Activated naive CD8-positive, alpha-beta T cell treated with anti-CD3 and anti-CD28 coated beads, Interleukin-2, amount 10 ng/mL, durations not matched to agents 7 days and 5 days (primary cell): ENCODE measurements at regions of chr6 and their contacts with region 1.

Region 1: GRCh38 chr6:26156076-26156849 is 69.0 kb downstream of the HFE start:
- DNase-seq: peak; percentile 94
- ATAC-seq: peak; percentile 44
- H3K4me3 Mint-ChIP-seq: peak overlapping the region; percentile 100
- H3K27ac Mint-ChIP-seq: peak overlapping the region; percentile 99
- H3K4me1 Mint-ChIP-seq: peaks cover 43% of the 10 kb centered on the region
- H3K27me3 Mint-ChIP-seq: no peaks in the 10 kb centered on the region

Region 2: DNA sequence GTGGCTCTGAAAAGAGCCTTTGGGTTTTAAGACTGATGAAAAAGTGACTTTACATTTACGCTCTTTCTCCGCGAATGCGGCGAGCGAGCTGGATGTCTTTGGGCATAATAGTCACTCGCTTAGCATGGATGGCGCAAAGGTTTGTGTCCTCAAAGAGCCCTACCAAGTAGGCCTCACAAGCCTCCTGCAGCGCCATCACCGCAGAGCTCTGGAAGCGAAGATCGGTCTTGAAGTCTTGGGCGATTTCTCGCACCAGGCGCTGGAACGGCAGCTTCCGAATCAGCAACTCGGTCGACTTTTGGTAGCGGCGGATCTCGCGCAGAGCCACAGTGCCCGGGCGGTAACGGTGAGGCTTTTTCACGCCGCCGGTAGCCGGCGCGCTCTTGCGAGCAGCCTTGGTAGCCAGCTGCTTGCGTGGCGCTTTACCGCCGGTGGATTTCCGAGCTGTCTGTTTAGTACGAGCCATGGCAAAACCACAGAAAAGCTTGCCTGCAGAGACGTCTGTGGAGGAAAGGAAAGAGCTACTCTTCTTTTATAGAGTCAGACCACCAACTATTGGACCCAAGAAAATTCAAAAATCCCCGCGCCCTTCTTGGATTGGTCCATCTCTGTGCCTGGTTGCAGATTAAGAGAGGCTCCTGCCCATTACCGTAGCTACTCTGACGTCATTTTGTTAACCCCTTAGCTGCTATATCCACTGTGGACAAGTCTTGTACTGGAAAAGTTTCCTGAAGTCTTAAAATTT is 124.5 kb before region 1 on chr6:
- POLR2A ChIA-PET with region 1: interaction called, 253 read pairs
- DNase-seq: peak; percentile 84
- ATAC-seq: peak; percentile 66
- H3K4me3 Mint-ChIP-seq: peak overlapping the region; percentile 88
- H3K27ac Mint-ChIP-seq: peak overlapping the region; percentile 98
- H3K4me1 Mint-ChIP-seq: peaks cover 66% of the 10 kb centered on the region
- H3K27me3 Mint-ChIP-seq: peaks cover 3% of the 10 kb centered on the region

Region 3: GRCh38 chr6:26071135-26071534 is 85.1 kb before region 1 on chr6:
- POLR2A ChIA-PET with region 1: no interaction called
- DNase-seq: no peak
- ATAC-seq: no peak
- H3K4me3 Mint-ChIP-seq: no peak overlapping the region
- H3K27ac Mint-ChIP-seq: no peak overlapping the region
- H3K4me1 Mint-ChIP-seq: peaks cover 6% of the 10 kb centered on the region
- H3K27me3 Mint-ChIP-seq: peaks cover 25% of the 10 kb centered on the region

Region 4: DNA sequence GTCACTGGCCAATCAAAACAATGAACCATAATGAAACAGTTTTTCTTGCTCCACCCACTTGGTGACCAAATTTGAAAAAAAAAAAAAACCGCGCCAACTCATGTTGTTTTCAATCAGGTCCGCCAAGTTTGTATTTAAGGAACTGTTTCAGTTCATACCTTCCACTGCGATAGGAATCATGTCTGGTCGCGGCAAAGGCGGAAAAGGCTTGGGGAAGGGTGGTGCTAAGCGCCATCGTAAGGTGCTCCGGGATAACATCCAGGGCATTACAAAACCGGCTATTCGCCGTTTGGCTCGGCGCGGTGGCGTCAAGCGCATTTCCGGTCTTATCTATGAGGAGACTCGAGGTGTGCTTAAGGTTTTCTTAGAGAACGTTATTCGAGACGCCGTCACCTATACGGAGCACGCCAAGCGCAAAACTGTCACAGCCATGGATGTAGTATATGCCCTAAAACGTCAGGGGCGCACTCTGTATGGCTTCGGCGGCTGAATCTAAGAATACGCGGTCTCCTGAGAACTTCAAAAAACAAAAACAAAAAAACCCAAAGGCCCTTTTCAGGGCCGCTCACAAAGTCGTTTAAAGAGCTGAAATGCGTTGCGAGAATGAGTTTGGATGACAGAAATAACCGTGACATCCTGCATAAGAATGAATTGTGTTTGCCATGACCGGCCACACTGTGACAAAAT is 52.4 kb before region 1 on chr6:
- POLR2A ChIA-PET with region 1: interaction called, 115 read pairs
- DNase-seq: peak; percentile 86
- ATAC-seq: peak; percentile 89
- H3K4me3 Mint-ChIP-seq: peak overlapping the region; percentile 93
- H3K27ac Mint-ChIP-seq: peak overlapping the region; percentile 100
- H3K4me1 Mint-ChIP-seq: peaks cover 18% of the 10 kb centered on the region
- H3K27me3 Mint-ChIP-seq: no peaks in the 10 kb centered on the region

Region 5: GRCh38 chr6:26196846-26197648 is 40.8 kb after region 1 on chr6:
- POLR2A ChIA-PET with region 1: interaction called, 937 read pairs
- DNase-seq: peak; percentile 83
- ATAC-seq: peak; percentile 44
- H3K4me3 Mint-ChIP-seq: peak overlapping the region; percentile 87
- H3K27ac Mint-ChIP-seq: peak overlapping the region; percentile 96
- H3K4me1 Mint-ChIP-seq: peaks cover 48% of the 10 kb centered on the region
- H3K27me3 Mint-ChIP-seq: no peaks in the 10 kb centered on the region

Region 6: GRCh38 chr6:26240154-26241032 is 84.1 kb after region 1 on chr6:
- POLR2A ChIA-PET with region 1: interaction called, 233 read pairs
- DNase-seq: peak; percentile 81
- ATAC-seq: peak; percentile 82
- H3K4me3 Mint-ChIP-seq: peak overlapping the region; percentile 85
- H3K27ac Mint-ChIP-seq: peak overlapping the region; percentile 98
- H3K4me1 Mint-ChIP-seq: peaks cover 36% of the 10 kb centered on the region
- H3K27me3 Mint-ChIP-seq: no peaks in the 10 kb centered on the region

Region 7: DNA sequence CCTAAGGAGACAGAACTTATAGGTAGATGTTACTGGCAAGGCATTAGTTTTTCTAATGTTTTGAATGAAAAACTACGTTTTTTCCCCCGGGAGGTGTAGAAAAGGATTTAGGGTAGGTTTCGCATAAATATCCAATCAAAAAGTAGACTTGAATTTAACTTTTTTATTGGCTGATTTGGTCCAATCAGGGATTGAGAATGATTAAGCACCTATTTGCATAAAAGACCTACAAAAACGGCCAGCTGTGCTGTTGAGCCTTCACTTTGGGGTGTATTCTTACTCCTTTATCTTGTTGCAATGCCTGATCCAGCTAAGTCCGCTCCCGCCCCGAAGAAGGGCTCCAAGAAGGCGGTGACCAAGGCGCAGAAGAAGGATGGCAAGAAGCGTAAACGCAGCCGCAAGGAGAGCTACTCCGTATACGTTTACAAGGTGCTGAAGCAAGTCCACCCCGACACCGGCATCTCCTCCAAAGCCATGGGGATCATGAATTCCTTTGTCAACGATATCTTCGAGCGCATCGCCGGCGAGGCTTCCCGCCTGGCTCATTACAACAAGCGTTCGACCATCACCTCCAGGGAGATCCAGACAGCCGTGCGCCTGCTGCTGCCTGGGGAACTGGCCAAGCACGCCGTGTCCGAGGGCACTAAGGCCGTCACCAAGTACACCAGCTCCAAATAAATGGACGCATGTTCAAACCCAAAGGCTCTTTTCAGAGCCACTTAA is 95.3 kb after region 1 on chr6:
- POLR2A ChIA-PET with region 1: no interaction called
- DNase-seq: peak; percentile 78
- ATAC-seq: peak; percentile 58
- H3K4me3 Mint-ChIP-seq: peak overlapping the region; percentile 90
- H3K27ac Mint-ChIP-seq: peak overlapping the region; percentile 99
- H3K4me1 Mint-ChIP-seq: peaks cover 14% of the 10 kb centered on the region
- H3K27me3 Mint-ChIP-seq: no peaks in the 10 kb centered on the region

Region 8: GRCh38 chr6:27146706-27147505 is 990.6 kb after region 1 on chr6:
- POLR2A ChIA-PET with region 1: interaction called, 15 read pairs
- DNase-seq: peak; percentile 83
- ATAC-seq: peak; percentile 71
- H3K4me3 Mint-ChIP-seq: no peak overlapping the region
- H3K27ac Mint-ChIP-seq: no peak overlapping the region
- H3K4me1 Mint-ChIP-seq: peaks cover 18% of the 10 kb centered on the region
- H3K27me3 Mint-ChIP-seq: no peaks in the 10 kb centered on the region

Region 9: DNA sequence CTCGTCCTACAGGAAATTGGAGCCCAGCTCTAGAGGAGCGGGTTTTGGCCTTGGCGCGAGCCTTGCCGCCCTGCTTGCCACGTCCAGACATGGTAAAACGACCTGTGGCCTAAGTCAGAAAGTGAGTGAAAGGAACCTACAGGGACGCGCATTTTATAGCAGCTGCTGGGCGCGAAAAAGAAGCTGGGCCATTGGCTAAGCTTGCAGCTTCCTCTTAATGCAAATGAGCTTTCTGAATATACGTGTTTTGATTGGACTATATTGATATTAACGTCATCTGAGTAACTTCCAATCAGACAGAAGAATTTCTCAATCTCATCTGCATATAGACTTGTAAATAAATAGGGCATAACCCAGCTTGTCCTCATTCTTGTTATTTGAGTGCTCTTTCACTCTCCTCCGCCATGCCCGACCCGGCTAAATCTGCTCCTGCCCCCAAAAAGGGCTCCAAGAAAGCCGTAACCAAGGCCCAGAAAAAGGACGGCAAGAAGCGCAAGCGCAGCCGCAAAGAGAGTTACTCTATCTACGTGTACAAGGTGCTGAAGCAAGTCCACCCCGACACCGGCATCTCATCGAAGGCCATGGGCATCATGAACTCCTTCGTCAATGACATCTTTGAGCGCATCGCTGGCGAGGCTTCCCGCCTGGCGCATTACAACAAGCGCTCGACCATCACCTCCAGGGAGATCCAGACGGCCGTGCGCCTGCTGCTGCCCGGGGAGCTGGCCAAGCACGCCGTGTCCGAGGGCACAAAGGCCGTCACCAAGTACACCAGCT is 1737.0 kb after region 1 on chr6:
- POLR2A ChIA-PET with region 1: interaction called, 13 read pairs
- DNase-seq: peak; percentile 82
- ATAC-seq: peak; percentile 55
- H3K4me3 Mint-ChIP-seq: no peak overlapping the region
- H3K27ac Mint-ChIP-seq: no peak overlapping the region
- H3K4me1 Mint-ChIP-seq: peaks cover 43% of the 10 kb centered on the region
- H3K27me3 Mint-ChIP-seq: no peaks in the 10 kb centered on the region